OCI-LY7 (cell line): ENCODE measurements at regions of chr14 and their contacts with region 1.

Region 1: DNA sequence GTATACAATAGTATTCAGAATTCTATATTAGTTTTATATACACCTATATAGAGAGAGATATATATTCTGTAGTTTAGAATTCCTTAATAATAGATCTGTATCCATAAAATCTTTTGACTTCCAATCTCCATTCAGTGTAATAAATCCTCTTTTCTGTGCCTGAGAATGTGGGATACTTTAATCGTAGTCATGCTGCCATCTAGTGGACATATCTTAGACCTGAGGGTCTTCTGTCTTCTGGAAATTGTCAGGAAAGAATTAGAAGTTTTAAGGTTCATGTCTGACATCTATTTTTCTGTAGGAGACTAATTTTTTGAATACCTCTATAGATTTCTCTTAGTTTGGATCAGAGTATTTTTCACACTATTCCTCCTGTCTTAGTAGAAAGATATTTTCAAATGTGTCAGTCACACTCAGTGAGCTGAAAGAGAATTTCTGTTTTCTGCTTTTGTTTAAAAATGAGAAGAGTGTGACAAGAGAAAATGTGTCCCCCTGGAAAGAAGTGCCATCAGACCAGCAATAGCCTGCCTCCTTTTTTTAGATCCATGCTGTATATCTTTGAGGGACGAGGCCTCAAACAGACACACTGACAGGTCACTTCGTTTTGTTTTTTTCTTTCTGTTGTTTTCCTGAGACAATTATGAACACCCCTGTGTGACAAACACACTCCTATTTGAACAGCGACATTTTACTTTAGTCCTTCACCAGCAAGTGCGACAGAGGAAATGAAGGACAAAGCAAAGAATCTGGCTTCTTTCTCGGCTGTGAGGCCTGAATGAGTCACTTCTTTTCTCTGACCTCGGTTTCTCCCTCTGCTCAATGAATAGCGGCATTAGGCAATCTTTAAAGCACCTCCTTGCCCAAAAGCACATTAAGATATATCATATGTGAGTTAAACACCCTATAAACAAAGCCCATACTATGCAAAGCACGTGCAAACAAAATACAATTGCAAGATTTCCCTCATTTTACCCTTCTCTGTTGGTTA is 96.3 kb downstream of the GALC start:
- DNase-seq: peak; percentile 59
- H3K4me3 ChIP-seq: no peak overlapping the region
- H3K27ac ChIP-seq: no peak overlapping the region
- H3K4me1 ChIP-seq: no peaks in the 10 kb centered on the region
- CTCF ChIP-seq: peak; percentile 95

Region 2: DNA sequence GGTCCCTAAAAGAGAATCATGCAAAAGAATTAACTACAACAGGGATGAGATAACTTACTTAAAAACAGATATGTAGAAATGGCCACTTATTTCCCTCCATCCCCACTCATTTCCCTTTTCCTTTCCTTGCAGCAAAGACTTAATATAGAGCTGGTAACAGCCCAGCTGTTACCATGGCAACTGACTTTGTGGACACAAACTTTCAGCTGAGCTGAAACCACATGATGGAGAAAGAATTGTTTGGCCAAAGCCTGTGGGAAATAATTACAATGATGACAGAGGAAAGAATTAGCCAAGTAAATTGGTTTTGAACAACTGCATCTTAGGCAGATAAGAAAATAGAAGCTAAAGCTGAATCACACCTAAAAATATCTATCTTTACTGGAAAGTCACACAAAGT is 268.6 kb before region 1 on chr14:
- CTCF ChIA-PET with region 1: no interaction called
- POLR2A ChIA-PET with region 1: no interaction called
- intact Hi-C with region 1: no loop called
- DNase-seq: no peak
- H3K4me3 ChIP-seq: no peak overlapping the region
- H3K27ac ChIP-seq: no peak overlapping the region
- H3K4me1 ChIP-seq: peaks cover 12% of the 10 kb centered on the region
- CTCF ChIP-seq: no peak

Region 3: GRCh38 chr14:87805315-87805723 is 91.4 kb before region 1 on chr14:
- CTCF ChIA-PET with region 1: no interaction called
- POLR2A ChIA-PET with region 1: no interaction called
- intact Hi-C with region 1: loop called (anchors 2 kb)
- DNase-seq: peak; percentile 33
- H3K4me3 ChIP-seq: no peak overlapping the region
- H3K27ac ChIP-seq: no peak overlapping the region
- H3K4me1 ChIP-seq: no peaks in the 10 kb centered on the region
- CTCF ChIP-seq: peak; percentile 91